AG04450 (cell line): ENCODE measurements at regions of chr5 and their contacts with region 1.

Region 1: GRCh38 chr5:56123531-56124243 is 109.4 kb downstream of the ANKRD55 start:
- DNase-seq: peak; percentile 98
- H3K4me3 ChIP-seq: no peak overlapping the region
- H3K27ac ChIP-seq: peak overlapping the region; percentile 90
- H3K27me3 ChIP-seq: no peaks in the 10 kb centered on the region
- CTCF ChIP-seq: no peak

Region 2: DNA sequence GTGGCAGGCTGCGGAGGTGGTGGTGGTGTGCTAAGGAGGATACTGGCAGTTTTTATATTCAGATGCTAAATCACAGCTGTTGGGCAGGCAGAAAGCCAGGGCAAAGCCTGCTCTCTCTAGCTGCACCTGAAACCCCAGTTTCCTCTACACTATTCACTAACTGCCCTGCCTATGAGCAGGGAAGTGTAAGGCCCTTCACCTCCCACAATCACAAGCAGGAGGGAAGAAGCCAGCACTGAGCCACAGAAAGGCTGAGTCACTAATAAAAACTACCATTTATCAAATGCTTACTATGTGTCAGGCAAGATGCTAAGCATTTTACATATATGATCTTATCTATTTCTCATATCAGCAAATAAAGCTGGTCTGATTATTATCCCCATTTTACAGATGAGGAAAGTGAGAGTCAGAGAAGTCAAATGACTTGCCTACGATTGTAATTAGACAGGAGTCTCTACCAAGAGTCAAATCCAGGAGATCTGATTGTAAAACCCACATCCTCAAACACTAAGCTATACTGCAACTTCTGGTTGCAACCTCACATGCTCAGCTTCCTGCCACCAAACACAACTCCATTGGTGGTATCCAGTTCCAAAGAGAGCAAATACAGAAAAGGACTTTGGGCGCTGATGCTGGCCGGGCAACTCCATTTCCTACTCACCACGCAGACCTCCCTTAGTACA is 111.3 kb before region 1 on chr5:
- CTCF ChIA-PET with region 1: no interaction called
- POLR2A ChIA-PET with region 1: interaction called, 20 read pairs
- DNase-seq: no peak
- H3K4me3 ChIP-seq: no peak overlapping the region; the same call in 1 of the 2 replicates
- H3K27ac ChIP-seq: peak overlapping the region; percentile 94
- H3K27me3 ChIP-seq: no peaks in the 10 kb centered on the region
- CTCF ChIP-seq: no peak

Region 3: GRCh38 chr5:56175488-56175887 is 51.8 kb after region 1 on chr5:
- CTCF ChIA-PET with region 1: no interaction called
- POLR2A ChIA-PET with region 1: interaction called, 14 read pairs
- DNase-seq: no peak
- H3K4me3 ChIP-seq: no peak overlapping the region
- H3K27ac ChIP-seq: no peak overlapping the region
- H3K27me3 ChIP-seq: no peaks in the 10 kb centered on the region
- CTCF ChIP-seq: no peak

Region 4: GRCh38 chr5:56340196-56340980 is 216.7 kb after region 1 on chr5:
- CTCF ChIA-PET with region 1: no interaction called
- POLR2A ChIA-PET with region 1: no interaction called
- DNase-seq: no peak
- H3K4me3 ChIP-seq: no peak overlapping the region
- H3K27ac ChIP-seq: no peak overlapping the region
- H3K27me3 ChIP-seq: no peaks in the 10 kb centered on the region
- CTCF ChIP-seq: no peak